Right lobe of liver (tissue), 6 donors: ENCODE measurements at regions of chr11 and their contacts with region 1.

Region 1: DNA sequence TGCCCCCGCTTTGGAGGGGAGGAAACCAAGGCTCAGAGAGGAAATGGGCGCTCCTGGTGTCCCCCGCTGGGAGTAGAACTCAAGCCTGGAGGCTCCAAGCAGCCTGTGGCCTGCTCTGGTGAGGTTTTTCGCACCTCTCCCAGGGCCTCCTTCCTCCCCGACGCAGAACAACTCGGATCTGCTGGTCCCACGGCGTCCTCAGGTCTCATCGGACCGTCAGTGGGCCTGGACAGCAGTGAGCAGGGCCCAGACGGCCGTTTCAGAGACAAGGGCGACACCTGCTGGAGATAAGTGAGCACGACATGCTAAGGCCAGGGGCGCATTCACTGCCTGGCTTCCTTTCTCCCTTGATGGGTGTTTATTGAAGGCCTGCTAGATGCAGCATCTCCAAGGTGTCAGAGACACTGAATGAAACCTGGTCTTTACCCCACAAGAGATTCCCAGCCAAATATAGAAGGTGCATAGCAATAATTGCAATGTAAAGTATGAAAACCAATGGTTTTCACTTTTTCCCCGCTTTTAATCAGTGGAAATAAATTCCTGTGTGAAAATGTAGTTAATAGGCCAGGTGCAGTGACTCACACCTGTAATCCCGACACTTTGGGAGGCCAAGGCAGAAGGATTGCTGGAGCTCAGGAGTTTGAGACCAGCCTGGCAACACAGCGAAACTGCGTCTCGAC is 26.9 kb upstream of the CD82 start:
- DNase-seq: peak; percentile 75 to 78 (median 76)
- ATAC-seq: peak; percentile 97 to 100 (median 99)
- H3K4me3 ChIP-seq: no peak overlapping the region
- H3K27ac ChIP-seq: no peak overlapping the region
- H3K4me1 ChIP-seq: no peaks in the 10 kb centered on the region
- H3K27me3 ChIP-seq: no peaks in the 10 kb centered on the region
- CTCF ChIP-seq: peak; percentile 90 to 97 (median 96)
- POLR2A ChIP-seq: no peak

Region 2: GRCh38 chr11:44110231-44110679 is 428.3 kb before region 1 on chr11:
- intact Hi-C with region 1: loop called in 1 of 2 experiments (anchors 10 kb)
- DNase-seq: peak in 2 of 3 donors; percentile 40 to 56
- ATAC-seq: peak; percentile 89 to 94 (median 90)
- H3K4me3 ChIP-seq: no peak overlapping the region
- H3K27ac ChIP-seq: no peak overlapping the region
- H3K4me1 ChIP-seq: no peaks in the 10 kb centered on the region
- H3K27me3 ChIP-seq: no peaks in the 10 kb centered on the region
- CTCF ChIP-seq: peak; percentile 61 to 84 (median 68)
- POLR2A ChIP-seq: no peak

Region 3: DNA sequence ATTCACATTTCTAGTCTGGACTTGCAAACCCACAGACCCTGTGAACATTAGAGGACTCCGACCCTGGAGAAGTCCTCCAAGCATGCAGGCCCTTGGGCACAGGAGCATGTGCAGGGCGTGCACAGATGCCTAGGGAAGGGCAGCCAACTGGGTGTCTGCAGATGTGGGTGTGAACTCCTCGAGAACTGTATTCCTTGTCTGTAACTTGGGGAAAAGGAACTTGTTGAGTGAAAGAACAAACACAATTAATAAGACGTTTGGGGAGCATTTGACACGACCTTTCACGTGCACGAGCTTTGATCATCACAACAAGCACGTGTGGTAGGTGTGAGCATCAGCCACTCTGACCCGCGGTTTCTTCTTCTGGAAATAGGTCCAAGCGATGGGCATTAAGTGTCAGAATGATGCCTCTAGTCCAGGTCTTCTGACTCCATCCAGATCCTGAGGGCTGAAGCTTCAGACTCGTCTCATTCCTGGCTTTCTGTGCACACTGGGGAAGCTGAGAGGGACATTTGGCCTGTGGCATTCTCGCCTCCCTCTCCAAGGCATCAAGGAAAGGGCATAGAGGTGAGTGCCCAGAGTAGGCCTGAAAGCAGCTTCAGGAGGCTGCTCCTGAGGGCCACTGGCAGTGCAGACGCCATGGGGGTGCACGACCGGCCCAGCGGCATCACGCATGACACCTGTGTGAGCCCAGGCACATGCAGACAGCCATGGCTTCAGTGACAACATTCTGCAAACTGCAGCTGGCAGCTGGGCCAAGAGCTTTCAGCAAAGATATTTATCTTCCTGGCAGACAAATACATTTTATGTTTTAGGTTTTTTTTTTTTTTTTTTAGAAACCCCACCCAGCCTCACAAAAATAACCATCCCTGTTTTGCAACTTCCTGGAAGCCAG is 261.1 kb before region 1 on chr11:
- intact Hi-C with region 1: loop called in 1 of 2 experiments (anchors 5 kb)
- DNase-seq: no peak
- ATAC-seq: no peak
- H3K4me3 ChIP-seq: no peak overlapping the region
- H3K27ac ChIP-seq: no peak overlapping the region
- H3K4me1 ChIP-seq: no peaks in the 10 kb centered on the region
- H3K27me3 ChIP-seq: no peaks in the 10 kb centered on the region
- CTCF ChIP-seq: no peak
- POLR2A ChIP-seq: no peak

Region 4: GRCh38 chr11:44286268-44286880 is 252.1 kb before region 1 on chr11:
- intact Hi-C with region 1: loop called in 1 of 2 experiments (anchors 5 kb)
- DNase-seq: peak in 2 of 3 donors; percentile 45 to 72
- ATAC-seq: peak; percentile 81 to 93 (median 87)
- H3K4me3 ChIP-seq: no peak overlapping the region
- H3K27ac ChIP-seq: no peak overlapping the region
- H3K4me1 ChIP-seq: no peaks in the 10 kb centered on the region
- H3K27me3 ChIP-seq: no peaks in the 10 kb centered on the region
- CTCF ChIP-seq: peak; percentile 85 to 96 (median 92)
- POLR2A ChIP-seq: no peak